Activated naive CD8-positive, alpha-beta T cell treated with anti-CD3 and anti-CD28 coated beads, Interleukin-2, amount 10 ng/mL, durations not matched to agents 7 days and 5 days (primary cell): ENCODE measurements at regions of chr19 and their contacts with region 1.

Region 1: GRCh38 chr19:55258828-55259539 is at the start of gene PPP6R1:
- DNase-seq: peak; percentile 98
- ATAC-seq: peak; percentile 77
- H3K4me3 Mint-ChIP-seq: peak within 1 kb of the TSS; percentile 99
- H3K27ac Mint-ChIP-seq: peak within 1 kb of the TSS; percentile 99
- H3K4me1 Mint-ChIP-seq: peaks cover 34% of the 10 kb centered on the region
- H3K27me3 Mint-ChIP-seq: no peaks in the 10 kb centered on the region
- total RNA-seq, gene PPP6R1: 211 to 226 TPM

Region 2: DNA sequence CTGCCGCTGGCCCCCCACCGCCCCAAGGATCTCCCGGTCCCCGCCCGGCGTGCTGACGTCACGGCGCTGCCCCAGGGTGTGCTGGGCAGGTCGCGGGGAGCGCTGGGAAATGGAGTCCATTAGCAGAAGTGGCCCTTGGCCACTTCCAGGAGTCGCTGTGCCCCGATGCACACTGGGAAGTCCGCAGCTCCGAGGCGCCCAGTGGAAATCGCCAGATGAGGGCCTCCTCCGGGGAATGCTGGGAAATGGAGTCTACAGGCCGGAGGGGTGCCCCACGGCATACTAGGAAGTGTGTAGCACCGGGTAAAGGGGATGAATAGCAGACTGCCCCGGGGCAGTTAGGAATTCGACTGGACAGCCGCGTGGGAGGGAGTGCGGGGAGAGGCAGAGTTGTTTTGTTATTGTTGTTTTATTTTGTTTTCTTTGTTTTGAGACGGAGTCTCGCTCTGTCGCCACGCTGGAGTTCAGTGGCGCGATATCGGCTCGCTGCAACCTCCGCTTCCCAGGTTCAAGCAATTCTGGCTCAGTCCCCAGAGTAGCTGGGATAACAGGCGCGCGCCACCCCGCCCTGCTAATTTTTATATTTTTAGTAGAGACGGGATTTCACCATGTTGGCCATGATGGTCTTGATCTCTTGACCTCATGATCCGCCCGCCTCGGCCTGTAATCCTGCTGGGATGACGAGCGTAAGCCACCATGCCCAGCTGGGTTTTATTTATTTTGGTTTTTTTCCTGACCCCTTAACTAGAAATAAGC is 141.2 kb before region 1 on chr19 and contains the start of gene PPP1R12C:
- POLR2A ChIA-PET with region 1: interaction called, 17 read pairs
- DNase-seq: peak; percentile 97
- ATAC-seq: peak; percentile 93
- H3K4me3 Mint-ChIP-seq: peak within 1 kb of the TSS; percentile 98
- H3K27ac Mint-ChIP-seq: peak within 1 kb of the TSS; percentile 96
- H3K4me1 Mint-ChIP-seq: peaks cover 27% of the 10 kb centered on the region
- H3K27me3 Mint-ChIP-seq: peaks cover under 1% of the 10 kb centered on the region
- total RNA-seq, gene PPP1R12C: 147 to 157 TPM

Region 3: DNA sequence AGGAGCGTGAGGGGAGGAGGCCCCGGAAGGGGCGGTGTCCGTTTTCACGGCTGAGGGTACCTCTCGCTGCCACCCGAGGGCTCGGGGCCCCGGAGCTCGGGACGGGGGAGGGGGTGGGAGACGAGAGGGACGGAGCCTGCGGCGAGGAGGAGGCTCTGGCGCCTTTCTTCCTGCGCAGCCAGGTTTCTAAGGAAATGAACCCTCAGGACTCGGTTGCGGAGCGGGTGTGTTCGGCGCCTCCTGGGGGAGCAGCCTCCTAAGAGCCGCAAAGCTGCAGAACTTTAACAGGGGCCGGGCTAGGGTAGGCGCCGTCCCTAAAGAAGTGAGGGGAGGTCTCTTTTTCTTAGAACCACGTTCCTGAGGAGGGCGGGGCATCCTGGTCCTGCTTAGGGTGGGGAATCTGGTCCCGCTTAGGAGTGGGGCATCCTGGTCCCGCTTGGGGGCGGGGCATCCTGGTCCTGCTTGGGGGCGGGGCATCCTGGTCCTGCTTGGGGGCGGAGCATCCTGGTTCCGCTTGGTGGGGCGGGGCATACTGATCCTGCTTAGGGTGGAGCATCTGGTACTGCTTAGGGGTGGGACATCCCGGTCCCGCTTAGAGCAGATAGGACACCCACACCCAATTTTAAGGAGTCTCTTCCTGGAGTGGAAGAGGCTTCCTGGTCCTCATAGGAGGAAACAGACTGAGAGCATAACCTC is 85.1 kb before region 1 on chr19:
- POLR2A ChIA-PET with region 1: interaction called, 10 read pairs
- DNase-seq: peak; percentile 75
- ATAC-seq: peak; percentile 81
- H3K4me3 Mint-ChIP-seq: peak overlapping the region; percentile 76
- H3K27ac Mint-ChIP-seq: no peak overlapping the region
- H3K4me1 Mint-ChIP-seq: peaks cover 21% of the 10 kb centered on the region
- H3K27me3 Mint-ChIP-seq: peaks cover 82% of the 10 kb centered on the region

Region 4: DNA sequence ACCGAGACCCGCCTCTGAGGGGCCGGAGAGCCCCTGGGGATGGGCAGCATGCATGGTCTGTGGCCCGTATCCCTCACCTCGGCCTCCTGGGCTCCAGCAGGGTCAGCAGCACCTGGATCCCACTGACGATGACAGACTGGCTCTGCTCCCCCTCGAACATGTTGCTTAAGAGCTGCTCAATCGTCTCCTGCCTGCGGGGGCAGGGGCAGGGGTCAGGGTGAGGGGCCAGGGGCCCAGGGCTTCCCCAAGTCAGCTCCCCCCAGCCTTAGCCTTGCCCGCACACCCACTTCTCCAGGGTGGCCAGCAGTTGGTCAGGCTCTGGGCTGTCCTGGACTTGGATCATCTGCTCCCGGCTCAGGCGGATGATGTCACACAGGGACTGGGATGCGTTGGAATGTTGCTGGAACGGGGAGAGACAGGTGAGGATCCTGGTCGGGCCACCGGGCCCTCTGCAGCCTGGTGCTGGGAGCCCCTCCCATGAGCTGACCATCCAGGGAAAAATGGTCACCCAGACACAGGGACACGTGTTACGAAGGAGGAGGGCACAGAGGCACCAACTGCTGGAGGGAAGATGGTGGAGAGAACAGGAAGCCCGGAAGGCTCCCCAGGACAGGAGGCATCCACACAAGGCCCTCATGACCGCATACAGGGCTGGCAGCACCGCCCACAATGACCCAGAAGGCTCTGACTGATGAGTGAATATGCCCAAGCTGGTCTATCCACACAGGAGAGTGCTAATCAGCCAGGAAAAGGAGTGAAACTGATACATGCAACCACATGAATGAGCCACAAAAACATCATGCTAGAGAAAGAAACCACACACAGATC is 16.7 kb before region 1 on chr19:
- POLR2A ChIA-PET with region 1: interaction called, 13 read pairs
- DNase-seq: no peak
- ATAC-seq: no peak
- H3K4me3 Mint-ChIP-seq: no peak overlapping the region
- H3K27ac Mint-ChIP-seq: no peak overlapping the region
- H3K4me1 Mint-ChIP-seq: peaks cover 2% of the 10 kb centered on the region
- H3K27me3 Mint-ChIP-seq: no peaks in the 10 kb centered on the region

Region 5: GRCh38 chr19:55279770-55280643 is 21.0 kb after region 1 on chr19 and contains the start of gene HSPBP1:
- POLR2A ChIA-PET with region 1: interaction called, 120 read pairs
- DNase-seq: peak; percentile 99
- ATAC-seq: peak; percentile 87
- H3K4me3 Mint-ChIP-seq: peak within 1 kb of the TSS; percentile 99
- H3K27ac Mint-ChIP-seq: peak within 1 kb of the TSS; percentile 98
- H3K4me1 Mint-ChIP-seq: peaks cover 28% of the 10 kb centered on the region
- H3K27me3 Mint-ChIP-seq: peaks cover 9% of the 10 kb centered on the region
- total RNA-seq, gene HSPBP1: 19.5 to 20.3 TPM

Region 6: DNA sequence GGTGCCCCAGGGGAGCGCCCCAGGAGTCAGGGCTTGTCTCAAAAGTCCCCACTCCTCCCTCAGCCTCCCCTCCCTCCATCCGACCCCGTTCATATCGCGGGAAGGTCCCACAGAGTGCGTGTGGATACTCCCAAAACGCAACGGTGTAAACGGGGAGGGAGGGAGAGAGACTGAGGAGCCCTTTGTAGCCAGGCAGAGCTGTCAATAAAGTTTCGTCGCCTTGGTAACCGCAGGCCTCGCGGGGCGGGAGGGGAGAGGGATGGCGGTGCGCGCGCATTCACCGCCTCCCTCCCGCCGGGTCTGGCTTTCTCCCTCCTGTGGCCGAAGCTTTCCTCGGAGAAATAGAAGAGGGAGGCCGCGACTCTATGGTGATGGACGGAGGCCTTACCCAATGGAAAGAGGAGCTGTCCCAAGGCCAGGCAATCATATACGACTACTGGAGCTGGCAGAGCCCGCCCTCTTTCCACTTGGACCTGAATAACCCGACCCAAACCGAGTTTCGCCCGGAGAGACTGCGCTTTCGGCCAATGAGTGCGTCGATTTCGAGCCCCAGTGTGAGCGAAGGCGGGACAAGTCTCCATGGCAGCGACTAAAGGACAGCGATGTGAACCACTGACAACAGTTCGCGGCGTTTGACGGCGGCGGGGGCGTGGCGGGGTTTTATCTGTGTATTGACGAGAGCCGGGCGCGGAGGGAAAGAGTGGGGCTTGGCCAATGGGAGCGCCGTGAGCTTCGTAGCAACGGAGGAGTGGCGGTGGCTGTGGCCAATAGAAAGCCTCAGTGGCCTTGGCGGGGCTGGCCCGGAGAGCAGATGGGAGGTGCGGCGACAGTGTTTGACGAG is 80.3 kb after region 1 on chr19 and contains the start of gene KMT5C:
- POLR2A ChIA-PET with region 1: interaction called, 14 read pairs
- DNase-seq: peak; percentile 99
- ATAC-seq: peak; percentile 87
- H3K4me3 Mint-ChIP-seq: peak within 1 kb of the TSS; percentile 97
- H3K27ac Mint-ChIP-seq: peak within 1 kb of the TSS; percentile 98
- H3K4me1 Mint-ChIP-seq: peaks cover 14% of the 10 kb centered on the region
- H3K27me3 Mint-ChIP-seq: peaks cover 16% of the 10 kb centered on the region
- total RNA-seq, gene KMT5C: 26.4 to 28.5 TPM

Region 7: GRCh38 chr19:55385740-55386529 is 127.0 kb after region 1 on chr19 and contains the start of gene RPL28:
- POLR2A ChIA-PET with region 1: interaction called, 43 read pairs
- DNase-seq: peak; percentile 96
- ATAC-seq: peak; percentile 74
- H3K4me3 Mint-ChIP-seq: peak within 1 kb of the TSS; percentile 100
- H3K27ac Mint-ChIP-seq: peak within 1 kb of the TSS; percentile 99
- H3K4me1 Mint-ChIP-seq: peaks cover 53% of the 10 kb centered on the region
- H3K27me3 Mint-ChIP-seq: no peaks in the 10 kb centered on the region
- total RNA-seq, gene RPL28: 3,030 to 3,043 TPM